PC-3 (cell line): ENCODE measurements at regions of chr3 and their contacts with region 1.

Region 1: GRCh38 chr3:160676547-160677303 is at the start of gene ARL14:
- DNase-seq: peak; percentile 98
- ATAC-seq: peak; percentile 93
- H3K4me3 ChIP-seq: peak within 1 kb of the TSS; percentile 58
- H3K27ac ChIP-seq: peak within 1 kb of the TSS; percentile 91
- H3K4me1 ChIP-seq: peaks cover 59% of the 10 kb centered on the region
- H3K27me3 ChIP-seq: no peaks in the 10 kb centered on the region
- CTCF ChIP-seq: no peak
- total RNA-seq, gene ARL14: 3.9 and 4.2 TPM in 2 replicates

Region 2: GRCh38 chr3:160052385-160053047 is 624.2 kb before region 1 on chr3:
- CTCF ChIA-PET with region 1: no interaction called
- POLR2A ChIA-PET with region 1: no interaction called
- intact Hi-C with region 1: no loop called
- DNase-seq: no peak
- ATAC-seq: peak; percentile 49
- H3K4me3 ChIP-seq: peak overlapping the region; percentile 4; the same call in 1 of the 2 replicates
- H3K27ac ChIP-seq: no peak overlapping the region
- H3K4me1 ChIP-seq: no peaks in the 10 kb centered on the region
- H3K27me3 ChIP-seq: no peaks in the 10 kb centered on the region
- CTCF ChIP-seq: no peak

Region 3: DNA sequence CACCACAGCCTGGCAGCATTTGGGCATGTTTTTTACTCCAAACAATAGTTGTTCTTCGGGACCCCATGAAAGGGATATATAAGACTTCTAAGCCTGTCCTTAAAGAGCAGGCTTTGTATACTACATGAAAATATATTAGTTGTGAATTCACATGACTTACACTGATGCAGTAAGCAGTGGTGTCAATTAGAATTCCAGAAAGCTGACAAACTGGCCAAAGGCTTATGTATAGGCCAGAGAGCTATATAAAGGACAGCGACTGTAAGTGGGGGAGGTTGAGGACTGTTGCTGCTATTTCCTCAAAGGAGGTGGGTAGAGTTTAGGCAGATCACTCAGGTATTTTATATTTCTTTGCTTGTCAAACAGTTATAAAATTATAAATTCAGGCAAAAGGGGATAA is 136.2 kb before region 1 on chr3:
- CTCF ChIA-PET with region 1: no interaction called
- POLR2A ChIA-PET with region 1: no interaction called
- intact Hi-C with region 1: no loop called
- DNase-seq: no peak
- ATAC-seq: no peak
- H3K4me3 ChIP-seq: no peak overlapping the region
- H3K27ac ChIP-seq: no peak overlapping the region
- H3K4me1 ChIP-seq: no peaks in the 10 kb centered on the region
- H3K27me3 ChIP-seq: no peaks in the 10 kb centered on the region
- CTCF ChIP-seq: no peak

Region 4: GRCh38 chr3:160607826-160608225 is 68.9 kb before region 1 on chr3:
- CTCF ChIA-PET with region 1: no interaction called
- POLR2A ChIA-PET with region 1: no interaction called
- intact Hi-C with region 1: no loop called
- DNase-seq: no peak
- ATAC-seq: no peak
- H3K4me3 ChIP-seq: no peak overlapping the region
- H3K27ac ChIP-seq: no peak overlapping the region
- H3K4me1 ChIP-seq: 0 out of 2 replicates have a peak, but pooled peaks cover under 1% of the 10 kb centered on the region
- H3K27me3 ChIP-seq: no peaks in the 10 kb centered on the region
- CTCF ChIP-seq: no peak

Region 5: DNA sequence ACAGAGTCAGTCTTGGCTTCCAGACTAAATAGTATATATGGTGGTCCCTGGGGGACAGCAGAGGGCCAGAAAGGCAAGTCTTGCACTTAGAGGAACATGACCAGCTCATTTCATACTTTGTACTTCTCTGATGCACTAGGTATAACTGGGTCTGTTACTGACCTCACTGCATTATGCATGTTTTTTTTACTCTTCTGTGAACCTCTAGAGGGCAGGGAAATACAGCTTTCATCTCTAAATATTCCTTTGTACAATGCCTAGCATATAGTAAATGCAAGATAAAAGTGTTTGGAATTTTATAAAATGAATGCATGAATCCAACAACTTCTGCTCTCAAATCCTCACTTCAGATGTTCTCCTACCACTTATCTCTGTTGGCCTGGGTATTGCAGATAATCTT is 23.2 kb before region 1 on chr3:
- CTCF ChIA-PET with region 1: interaction called, 3 read pairs
- POLR2A ChIA-PET with region 1: no interaction called
- intact Hi-C with region 1: loop called (anchors 2 kb)
- DNase-seq: peak; percentile 27
- ATAC-seq: peak; percentile 87
- H3K4me3 ChIP-seq: no peak overlapping the region
- H3K27ac ChIP-seq: no peak overlapping the region
- H3K4me1 ChIP-seq: peaks cover 11% of the 10 kb centered on the region
- H3K27me3 ChIP-seq: no peaks in the 10 kb centered on the region
- CTCF ChIP-seq: peak; percentile 61